ENCODE measurements at regions of chr4 and their contacts with region 1.

Region 1: DNA sequence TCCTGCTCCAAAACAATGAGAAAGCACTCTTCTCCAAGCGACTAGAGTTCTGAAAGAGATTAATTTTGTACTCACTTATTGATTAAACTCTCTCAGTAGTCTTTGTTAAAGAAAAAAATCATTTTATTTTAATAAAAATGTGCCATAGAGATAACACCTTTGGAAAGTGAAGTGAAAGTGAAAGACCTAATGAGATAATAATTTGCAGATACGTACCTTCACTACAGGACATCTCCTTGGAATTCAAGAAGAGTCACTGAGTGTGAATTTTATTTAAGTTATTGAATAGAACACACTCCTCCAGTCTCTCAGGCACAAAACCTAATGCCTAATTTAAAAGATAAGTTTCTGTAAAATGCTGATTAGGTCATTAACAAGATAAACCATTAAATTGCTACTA is 1070.6 kb upstream of the GRID2 start:
- DNase-seq: no peak
- ATAC-seq: no peak
- H3K4me3 ChIP-seq: no peak overlapping the region
- H3K27ac ChIP-seq: no peak overlapping the region
- H3K4me1 ChIP-seq: no peaks in the 10 kb centered on the region
- H3K27me3 ChIP-seq: no peaks in the 10 kb centered on the region
- CTCF ChIP-seq: no peak
- EP300 ChIP-seq: no peak
- POLR2A ChIP-seq: no peak
- RAD21 ChIP-seq: no peak

Region 2: DNA sequence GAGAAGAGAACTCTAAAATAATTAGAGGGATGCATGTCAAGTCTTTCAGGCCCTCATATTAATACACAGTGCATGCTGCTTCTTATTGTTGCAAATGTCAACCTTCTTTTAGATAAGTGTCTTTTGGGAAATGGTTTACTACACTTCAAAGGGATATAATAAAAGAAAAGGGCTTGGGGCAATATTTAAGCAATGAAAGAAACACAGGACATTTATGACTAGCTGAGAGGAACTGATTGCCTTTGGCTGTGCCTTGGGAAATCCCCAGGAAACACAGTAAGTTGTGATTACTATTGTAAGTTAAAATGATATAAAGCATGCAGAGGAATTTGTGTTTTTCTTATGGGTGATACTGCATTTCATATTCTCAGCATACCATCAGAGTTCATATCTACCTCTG is 34.4 kb after region 1 on chr4:
- CTCF ChIA-PET with region 1: no interaction called
- POLR2A ChIA-PET with region 1: no interaction called
- in situ Hi-C with region 1: no loop called
- intact Hi-C with region 1: loop called (anchors 1 kb)
- DNase-seq: no peak
- ATAC-seq: no peak
- H3K4me3 ChIP-seq: no peak overlapping the region
- H3K27ac ChIP-seq: no peak overlapping the region
- H3K4me1 ChIP-seq: no peaks in the 10 kb centered on the region
- H3K27me3 ChIP-seq: no peaks in the 10 kb centered on the region
- CTCF ChIP-seq: no peak
- EP300 ChIP-seq: no peak
- POLR2A ChIP-seq: no peak
- RAD21 ChIP-seq: no peak

Region 3: DNA sequence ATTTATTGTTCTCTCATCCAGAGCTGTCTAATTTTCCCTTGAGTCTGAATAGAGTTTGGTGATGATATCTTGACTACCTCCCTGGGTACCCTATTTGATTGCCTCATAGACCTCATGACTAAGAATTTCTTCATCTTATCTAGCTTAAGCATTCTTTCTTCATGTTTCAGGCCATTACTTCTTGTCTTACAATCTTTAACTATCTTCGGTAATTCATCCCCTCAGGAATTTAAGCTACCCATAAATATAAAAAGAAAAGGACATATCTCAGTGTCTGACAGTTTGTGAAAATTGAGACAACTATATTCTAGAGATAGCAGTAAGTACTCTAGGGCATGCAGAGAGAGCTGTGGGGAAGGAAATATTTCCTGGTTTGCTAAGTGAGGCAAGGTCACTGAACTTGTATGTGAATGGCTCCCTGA is 604.5 kb after region 1 on chr4:
- CTCF ChIA-PET with region 1: no interaction called
- POLR2A ChIA-PET with region 1: no interaction called
- in situ Hi-C with region 1: no loop called
- intact Hi-C with region 1: no loop called
- DNase-seq: no peak
- ATAC-seq: no peak
- H3K4me3 ChIP-seq: no peak overlapping the region
- H3K27ac ChIP-seq: no peak overlapping the region
- H3K4me1 ChIP-seq: no peaks in the 10 kb centered on the region; the same call in 1 of the 2 replicates
- H3K27me3 ChIP-seq: no peaks in the 10 kb centered on the region
- CTCF ChIP-seq: no peak
- EP300 ChIP-seq: no peak
- POLR2A ChIP-seq: no peak
- RAD21 ChIP-seq: no peak